ENCODE measurements at regions of chr20 and their contacts with region 1.

Region 1: GRCh38 chr20:2206957-2207769 is 88.6 kb upstream of the TGM3 start:
- DNase-seq: no peak
- H3K4me3 ChIP-seq: peak overlapping the region; percentile 62
- CTCF ChIP-seq: peak; percentile 97

Region 2: GRCh38 chr20:2224368-2224639 is 17.1 kb after region 1 on chr20:
- CTCF ChIA-PET with region 1: interaction called, 31 read pairs
- POLR2A ChIA-PET with region 1: no interaction called
- DNase-seq: no peak
- H3K4me3 ChIP-seq: no peak overlapping the region
- CTCF ChIP-seq: no peak

Region 3: DNA sequence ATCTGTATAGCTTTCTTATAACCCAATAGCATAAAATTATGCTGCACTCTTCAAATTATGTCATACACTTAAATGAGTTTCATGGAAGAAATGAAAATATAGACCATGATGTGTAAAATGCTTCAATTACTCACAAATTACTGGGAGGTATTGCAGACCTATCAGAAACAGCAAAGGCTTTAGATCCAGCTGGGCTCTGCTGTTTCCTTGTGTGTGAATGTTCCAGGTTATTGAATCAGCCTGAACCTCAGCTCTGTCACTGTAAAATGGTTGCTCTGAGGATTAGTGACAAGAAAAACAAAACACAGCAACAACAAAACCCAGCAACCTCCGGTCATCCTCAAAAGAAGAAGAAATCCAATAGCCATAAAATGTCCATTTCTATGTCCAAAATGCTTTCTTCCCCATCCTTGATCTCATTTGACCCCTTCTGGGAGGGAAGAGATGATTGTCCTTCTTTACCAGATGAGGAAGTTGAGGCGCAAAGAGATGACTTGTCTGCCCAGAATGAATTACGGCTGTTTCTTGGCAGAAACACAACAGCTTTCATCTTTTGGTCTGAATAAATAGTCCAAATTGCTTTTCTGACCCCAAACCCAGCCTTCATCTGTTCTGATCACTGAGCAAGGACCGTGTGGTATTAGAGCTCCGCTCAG is 131.4 kb after region 1 on chr20:
- CTCF ChIA-PET with region 1: interaction called, 10 read pairs
- POLR2A ChIA-PET with region 1: no interaction called
- DNase-seq: no peak
- H3K4me3 ChIP-seq: no peak overlapping the region
- CTCF ChIP-seq: no peak

Region 4: DNA sequence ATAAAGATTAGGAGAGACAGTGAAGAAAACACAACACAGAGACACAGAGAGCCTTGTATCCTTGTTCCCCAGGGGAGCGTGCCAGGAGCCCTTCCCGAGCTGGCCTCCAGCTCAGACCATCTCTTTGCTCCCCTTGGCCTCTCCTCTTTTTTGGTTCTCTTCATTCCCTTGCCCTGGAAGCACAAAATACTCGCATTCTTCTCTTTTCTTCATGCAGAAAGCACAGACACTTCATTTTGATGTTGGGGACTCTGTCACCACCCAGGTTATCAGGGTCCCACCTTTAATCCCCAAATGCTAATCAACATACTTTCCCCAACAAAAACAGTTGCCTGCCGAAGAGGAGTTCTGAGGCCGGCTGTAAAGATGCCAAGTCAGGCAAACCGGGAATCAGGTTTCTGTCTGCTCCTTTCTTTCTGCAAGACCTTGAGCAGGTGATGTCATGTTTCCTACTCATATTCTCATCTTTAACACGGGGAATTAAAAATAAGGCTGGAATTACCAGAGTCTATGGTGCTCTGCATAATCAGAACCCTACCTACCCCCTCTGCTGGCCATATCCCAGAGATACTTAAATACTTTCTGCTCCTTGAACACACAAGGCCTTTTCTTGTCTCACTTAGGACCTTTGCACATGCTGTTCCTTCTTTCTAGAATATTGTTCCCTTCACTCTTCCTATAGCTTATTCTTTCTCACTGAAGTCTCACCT is 195.3 kb after region 1 on chr20:
- CTCF ChIA-PET with region 1: interaction called, 99 read pairs
- POLR2A ChIA-PET with region 1: no interaction called
- DNase-seq: peak; percentile 34
- H3K4me3 ChIP-seq: no peak overlapping the region
- CTCF ChIP-seq: peak; percentile 40

Region 5: GRCh38 chr20:2460752-2461424 is 253.7 kb after region 1 on chr20:
- CTCF ChIA-PET with region 1: interaction called, 62 read pairs
- POLR2A ChIA-PET with region 1: no interaction called
- DNase-seq: no peak
- H3K4me3 ChIP-seq: no peak overlapping the region
- CTCF ChIP-seq: no peak

Measured in AG04449 (cell line).